ENCODE measurements at regions of chr12 and their contacts with region 1.

Region 1: DNA sequence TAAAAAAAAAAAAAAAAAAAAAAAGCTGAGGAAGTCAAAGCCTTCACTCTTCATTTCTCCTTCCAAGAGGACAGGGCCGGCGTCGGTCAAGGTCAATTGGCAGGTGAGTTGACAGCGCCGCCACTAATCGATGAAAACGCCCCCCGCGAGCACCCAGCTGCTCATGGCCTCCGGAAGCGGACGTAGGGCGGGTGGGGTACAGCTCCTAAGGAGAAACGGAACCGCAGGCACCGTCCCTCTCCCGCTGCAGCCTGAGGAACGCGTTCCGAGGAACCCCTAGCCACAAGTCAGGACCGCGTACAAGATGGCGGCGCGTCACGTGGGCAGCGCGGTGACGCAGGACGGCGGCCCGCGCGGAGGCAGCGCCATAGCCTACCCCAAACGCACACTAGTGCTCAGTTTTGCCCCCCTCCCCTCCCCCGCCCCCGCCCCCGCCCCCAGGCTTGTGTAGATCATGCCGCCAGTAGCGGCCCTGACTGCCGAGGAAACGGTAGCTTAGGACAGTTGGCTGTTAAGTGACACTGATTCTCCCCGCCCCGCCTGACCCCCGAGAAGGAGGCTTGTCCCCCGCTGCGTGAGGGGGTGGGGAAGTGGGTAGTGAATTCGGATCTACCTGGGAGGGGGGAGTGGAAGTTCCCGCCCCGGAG is at the start of gene ATF1:
- DNase-seq: peak; percentile 92 to 95
- ATAC-seq: peak; percentile 90 to 94 (median 92)
- H3K4me3 ChIP-seq: peak within 1 kb of the TSS; percentile 99
- H3K27ac ChIP-seq: peak within 1 kb of the TSS; percentile 96
- H3K4me1 ChIP-seq: peaks cover 35% of the 10 kb centered on the region
- H3K27me3 ChIP-seq: no peaks in the 10 kb centered on the region
- CTCF ChIP-seq: no peak
- total RNA-seq, gene ATF1: 41.3 to 72.5 (median 49.3) TPM

Region 2: DNA sequence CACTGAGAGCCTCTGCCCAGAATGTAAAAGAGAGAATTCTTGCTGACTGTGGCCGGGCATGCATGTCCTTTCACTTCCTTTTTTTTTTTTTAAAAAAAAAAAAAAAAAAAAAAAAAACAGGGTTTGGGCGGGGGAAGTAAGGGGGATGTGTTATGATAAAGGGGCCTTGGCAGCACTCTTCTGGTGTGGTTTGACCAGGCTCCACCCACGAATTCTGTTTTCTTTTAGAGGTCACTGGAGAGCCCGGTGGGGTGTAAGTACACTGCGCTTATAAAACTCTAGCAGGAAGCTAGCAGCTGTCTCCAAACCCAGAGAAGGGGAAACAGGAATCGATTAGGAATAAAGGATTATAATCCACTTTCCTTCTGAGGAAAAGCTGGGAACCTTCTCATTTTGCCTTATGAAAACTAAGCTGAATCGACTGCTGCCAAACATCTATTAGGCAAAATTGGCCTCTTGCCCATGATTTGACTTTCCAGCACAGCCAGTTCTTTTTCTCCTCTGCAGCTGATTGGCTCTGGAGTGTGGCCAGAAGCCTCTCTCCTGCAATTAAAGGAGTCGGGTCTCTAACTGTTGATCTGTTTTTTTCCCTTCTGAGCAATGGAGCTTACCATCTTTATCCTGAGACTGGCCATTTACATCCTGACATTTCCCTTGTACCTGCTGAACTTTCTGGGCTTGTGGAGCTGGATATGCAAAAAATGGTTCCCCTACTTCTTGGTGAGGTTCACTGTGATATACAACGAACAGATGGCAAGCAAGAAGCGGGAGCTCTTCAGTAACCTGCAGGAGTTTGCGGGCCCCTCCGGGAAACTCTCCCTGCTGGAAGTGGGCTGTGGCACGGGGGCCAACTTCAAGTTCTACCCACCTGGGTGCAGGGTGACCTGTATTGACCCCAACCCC is 160.9 kb after region 1 on chr12:
- intact Hi-C with region 1: no loop called
- DNase-seq: peak; percentile 89 to 94
- ATAC-seq: peak; percentile 81 to 87 (median 83)
- H3K4me3 ChIP-seq: peak overlapping the region; percentile 78
- H3K27ac ChIP-seq: peak overlapping the region; percentile 76
- H3K4me1 ChIP-seq: peaks cover 53% of the 10 kb centered on the region
- H3K27me3 ChIP-seq: no peaks in the 10 kb centered on the region
- CTCF ChIP-seq: no peak

Region 3: DNA sequence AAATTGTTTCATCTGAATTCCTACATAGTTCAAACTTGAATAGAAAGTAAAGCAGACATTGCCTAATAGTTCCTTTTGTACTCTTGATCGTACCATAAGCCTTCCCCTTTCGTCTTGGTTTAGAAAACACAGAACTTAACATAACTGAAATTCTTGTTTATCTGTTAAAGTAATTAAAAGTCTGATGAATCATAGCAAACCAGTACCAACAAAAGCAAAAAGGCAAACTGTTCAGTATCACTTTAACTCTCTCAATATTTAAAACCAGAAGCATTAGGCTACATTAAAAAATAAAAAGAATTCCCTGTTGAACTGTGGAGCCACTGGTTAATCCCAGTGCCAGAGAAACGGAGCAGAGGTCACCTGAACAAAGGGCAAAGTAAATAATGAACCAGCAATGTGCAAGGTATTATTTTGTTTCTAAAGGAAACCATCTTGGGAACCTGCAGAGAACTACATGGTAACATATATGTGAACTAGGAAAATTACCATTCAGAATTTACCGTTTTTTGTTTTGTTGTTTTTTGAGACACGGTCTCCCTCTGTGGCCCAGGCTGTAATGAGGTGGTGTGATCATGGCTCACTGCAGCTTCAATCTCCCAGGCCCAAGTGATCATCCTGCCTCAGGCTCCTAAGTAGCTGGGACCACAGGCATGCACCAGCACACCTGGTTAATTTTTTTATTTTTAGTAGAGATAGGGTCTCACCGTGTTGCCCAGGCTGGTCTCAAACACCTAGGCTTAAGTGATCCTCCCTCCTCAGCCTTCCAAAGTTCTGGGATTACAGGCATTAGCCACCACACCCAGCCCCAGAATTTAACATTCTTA is 171.4 kb after region 1 on chr12:
- intact Hi-C with region 1: loop called in 1 of 2 experiments (anchors 5 kb)
- DNase-seq: no peak
- ATAC-seq: no peak
- H3K4me3 ChIP-seq: no peak overlapping the region
- H3K27ac ChIP-seq: peak overlapping the region; percentile 66
- H3K4me1 ChIP-seq: peaks cover 40% of the 10 kb centered on the region
- H3K27me3 ChIP-seq: no peaks in the 10 kb centered on the region
- CTCF ChIP-seq: no peak

Region 4: DNA sequence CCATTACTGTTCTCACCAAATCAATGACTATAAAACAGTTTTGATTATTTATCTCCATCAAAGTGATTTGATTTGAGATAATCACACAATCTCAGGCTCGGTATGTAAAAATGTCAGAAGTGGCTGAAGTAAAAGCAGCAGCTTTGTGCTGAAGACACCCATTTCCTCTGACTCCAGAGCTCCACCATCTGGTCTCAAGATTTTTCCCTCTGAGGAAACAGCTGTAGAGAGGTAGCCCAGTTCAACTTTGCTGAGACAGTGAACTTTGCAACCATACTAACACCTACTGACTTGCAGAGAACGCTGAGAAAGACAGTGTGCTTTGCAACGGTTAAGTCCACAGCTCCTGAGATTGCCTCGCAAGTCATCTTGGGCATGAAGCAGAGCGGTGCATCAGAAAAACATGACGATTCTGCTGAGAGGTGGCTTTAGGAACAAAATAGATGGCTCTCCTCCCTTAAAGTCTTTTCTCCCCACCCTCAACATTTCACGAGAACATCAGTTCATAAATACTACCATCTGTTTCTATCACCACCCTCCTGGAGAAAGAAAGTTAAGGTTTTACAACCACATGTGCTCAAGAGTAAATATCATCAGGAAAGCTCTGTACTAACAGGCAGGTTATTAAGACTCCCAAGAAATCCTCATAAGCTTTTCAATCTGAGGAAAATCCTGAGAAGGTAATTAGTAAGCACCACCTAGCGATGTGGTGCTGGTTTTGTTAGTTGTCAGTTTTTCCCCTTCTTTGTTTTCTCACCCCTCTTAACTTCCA is 223.4 kb after region 1 on chr12:
- intact Hi-C with region 1: loop called (anchors 5 to 10 kb)
- DNase-seq: no peak
- ATAC-seq: peak; percentile 42 to 73 (median 65)
- H3K4me3 ChIP-seq: no peak overlapping the region
- H3K27ac ChIP-seq: peak overlapping the region; percentile 82
- H3K4me1 ChIP-seq: peaks cover 25% of the 10 kb centered on the region
- H3K27me3 ChIP-seq: no peaks in the 10 kb centered on the region
- CTCF ChIP-seq: peak; percentile 65

Region 5: GRCh38 chr12:51020448-51021182 is 256.9 kb after region 1 on chr12:
- intact Hi-C with region 1: no loop called
- DNase-seq: no peak
- ATAC-seq: no peak
- H3K4me3 ChIP-seq: no peak overlapping the region
- H3K27ac ChIP-seq: no peak overlapping the region
- H3K4me1 ChIP-seq: peaks cover 36% of the 10 kb centered on the region
- H3K27me3 ChIP-seq: no peaks in the 10 kb centered on the region
- CTCF ChIP-seq: no peak

Region 6: GRCh38 chr12:51238510-51239334 is 475.0 kb after region 1 on chr12 and contains the start of gene DAZAP2:
- intact Hi-C with region 1: loop called in 1 of 2 experiments (anchors 10 kb)
- DNase-seq: peak; percentile 95 to 98
- ATAC-seq: peak; percentile 98 to 99 (median 98)
- H3K4me3 ChIP-seq: peak within 1 kb of the TSS; percentile 100
- H3K27ac ChIP-seq: peak within 1 kb of the TSS; percentile 100
- H3K4me1 ChIP-seq: peaks cover 27% of the 10 kb centered on the region
- H3K27me3 ChIP-seq: no peaks in the 10 kb centered on the region
- CTCF ChIP-seq: peak; percentile 28
- total RNA-seq, gene DAZAP2: 62.4 to 157 (median 105) TPM

Region 7: DNA sequence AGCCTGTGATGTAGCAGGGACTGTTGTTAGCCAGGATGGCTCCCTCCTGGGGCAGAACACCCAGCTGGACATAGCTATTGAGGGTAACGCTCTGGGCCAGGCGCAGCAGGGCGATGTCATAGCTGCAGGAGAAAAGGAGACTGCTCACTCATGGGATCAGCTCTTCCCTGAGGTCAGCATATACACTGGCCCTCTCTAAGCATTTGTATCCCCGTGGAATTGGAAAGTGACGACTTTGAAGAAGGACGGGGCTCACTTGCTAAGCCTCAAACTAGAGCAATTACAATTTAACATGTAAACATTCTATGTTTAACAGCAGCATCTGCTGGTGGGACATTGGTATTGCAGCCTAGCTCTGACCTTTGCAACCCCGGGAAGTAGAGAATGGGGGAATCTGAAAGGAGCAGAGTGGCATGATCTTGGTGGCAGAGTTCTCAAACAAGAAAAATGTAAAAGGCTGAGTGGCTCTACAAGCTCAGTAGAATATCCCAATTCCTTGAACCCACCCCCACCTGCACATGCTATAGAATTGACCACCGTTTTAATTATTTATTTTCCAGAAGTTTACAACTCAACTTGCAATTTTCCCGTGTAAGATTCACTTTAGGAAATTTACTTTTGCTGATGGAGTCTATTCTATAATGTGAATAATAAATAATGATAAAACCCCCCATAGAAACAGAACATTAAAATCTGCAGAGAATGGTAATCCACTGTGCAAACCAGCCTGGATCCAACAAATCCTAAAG is 577.7 kb after region 1 on chr12:
- intact Hi-C with region 1: loop called in 1 of 2 experiments (anchors 10 kb)
- DNase-seq: peak; percentile 41 to 73
- ATAC-seq: peak; percentile 80 to 96 (median 88)
- H3K4me3 ChIP-seq: peak overlapping the region; percentile 48
- H3K27ac ChIP-seq: no peak overlapping the region
- H3K4me1 ChIP-seq: no peaks in the 10 kb centered on the region
- H3K27me3 ChIP-seq: no peaks in the 10 kb centered on the region
- CTCF ChIP-seq: peak; percentile 97